Mammary epithelial cell (primary cell): ENCODE measurements at regions of chr1 and their contacts with region 1.

Region 1: GRCh38 chr1:47333922-47334764 is 553 bp downstream of the CMPK1 start:
- DNase-seq: peak; percentile 75
- H3K4me3 ChIP-seq: peak overlapping the region; percentile 93 to 99 (median 98)
- H3K27ac ChIP-seq: peak overlapping the region; percentile 60
- H3K4me1 ChIP-seq: peaks cover 20% of the 10 kb centered on the region
- H3K27me3 ChIP-seq: no peaks in the 10 kb centered on the region
- CTCF ChIP-seq: peak in 1 of 2 donors; percentile 31

Region 2: GRCh38 chr1:47313915-47314664 is 20.1 kb before region 1 on chr1 and contains the start of gene STIL:
- CTCF ChIA-PET with region 1: interaction called, 3 read pairs
- dilution Hi-C with region 1: no loop called
- in situ Hi-C with region 1: no loop called
- intact Hi-C with region 1: loop called (anchors 1 kb)
- DNase-seq: peak; percentile 100
- H3K4me3 ChIP-seq: peak within 1 kb of the TSS; percentile 85 to 95 (median 90)
- H3K27ac ChIP-seq: peak within 1 kb of the TSS; percentile 95
- H3K4me1 ChIP-seq: peaks cover 3% of the 10 kb centered on the region
- H3K27me3 ChIP-seq: no peaks in the 10 kb centered on the region
- CTCF ChIP-seq: peak in 1 of 2 donors; percentile 1
- total RNA-seq, gene STIL: 8.0 to 17.9 TPM

Region 3: DNA sequence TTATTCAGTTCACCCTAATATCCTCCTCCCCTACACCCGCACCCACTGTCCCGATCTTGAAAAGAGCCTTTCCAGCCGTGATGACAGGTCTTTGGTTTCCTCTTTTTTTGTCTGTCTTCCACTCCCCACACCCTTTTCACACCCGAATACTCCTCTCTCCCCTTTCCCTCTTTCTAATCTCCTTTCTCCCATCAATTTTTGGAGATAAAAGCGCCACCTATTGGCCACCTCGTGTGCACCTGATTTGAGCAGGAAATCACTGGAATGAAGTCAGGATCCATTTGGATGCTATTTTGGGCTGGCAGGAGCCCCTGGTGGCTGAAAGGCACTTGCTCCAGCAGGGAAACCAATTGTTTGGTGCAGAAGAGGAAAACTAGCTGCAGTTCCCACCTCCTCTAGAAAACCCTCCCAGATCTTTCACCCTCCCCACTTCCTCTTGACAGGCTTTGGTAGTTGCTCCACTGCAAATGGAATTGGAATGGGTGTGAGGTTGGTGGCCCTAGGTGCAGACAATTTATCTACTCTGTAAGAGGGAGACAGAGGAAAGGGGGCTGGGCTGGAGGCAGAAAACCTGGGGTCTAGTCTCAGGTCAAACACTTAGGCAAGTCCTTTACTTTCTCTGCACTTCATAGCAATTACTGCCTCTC is 90.3 kb after region 1 on chr1:
- CTCF ChIA-PET with region 1: interaction called, 3 read pairs
- dilution Hi-C with region 1: no loop called
- in situ Hi-C with region 1: no loop called
- intact Hi-C with region 1: loop called (anchors 1 kb)
- DNase-seq: peak; percentile 48
- H3K4me3 ChIP-seq: no peak overlapping the region
- H3K27ac ChIP-seq: no peak overlapping the region
- H3K4me1 ChIP-seq: no peaks in the 10 kb centered on the region
- H3K27me3 ChIP-seq: no peaks in the 10 kb centered on the region
- CTCF ChIP-seq: peak; percentile 84 to 94